ENCODE measurements at regions of chr2 and their contacts with region 1.

Region 1: GRCh38 chr2:125696561-125696960 is 959.4 kb upstream of the GYPC start:
- DNase-seq: no peak
- ATAC-seq: no peak
- H3K4me3 ChIP-seq: no peak overlapping the region
- H3K27ac ChIP-seq: no peak overlapping the region
- H3K4me1 ChIP-seq: no peaks in the 10 kb centered on the region
- H3K27me3 ChIP-seq: no peaks in the 10 kb centered on the region
- CTCF ChIP-seq: no peak
- POLR2A ChIP-seq: no peak

Region 2: GRCh38 chr2:125684932-125685331 is 11.6 kb before region 1 on chr2:
- intact Hi-C with region 1: loop called in 1 of 10 experiments (anchors 1 kb)
- DNase-seq: no peak
- ATAC-seq: no peak
- H3K4me3 ChIP-seq: no peak overlapping the region
- H3K27ac ChIP-seq: no peak overlapping the region
- H3K4me1 ChIP-seq: no peaks in the 10 kb centered on the region
- H3K27me3 ChIP-seq: no peaks in the 10 kb centered on the region
- CTCF ChIP-seq: no peak
- POLR2A ChIP-seq: no peak